ENCODE measurements at regions of chr10 and their contacts with region 1.

Region 1: DNA sequence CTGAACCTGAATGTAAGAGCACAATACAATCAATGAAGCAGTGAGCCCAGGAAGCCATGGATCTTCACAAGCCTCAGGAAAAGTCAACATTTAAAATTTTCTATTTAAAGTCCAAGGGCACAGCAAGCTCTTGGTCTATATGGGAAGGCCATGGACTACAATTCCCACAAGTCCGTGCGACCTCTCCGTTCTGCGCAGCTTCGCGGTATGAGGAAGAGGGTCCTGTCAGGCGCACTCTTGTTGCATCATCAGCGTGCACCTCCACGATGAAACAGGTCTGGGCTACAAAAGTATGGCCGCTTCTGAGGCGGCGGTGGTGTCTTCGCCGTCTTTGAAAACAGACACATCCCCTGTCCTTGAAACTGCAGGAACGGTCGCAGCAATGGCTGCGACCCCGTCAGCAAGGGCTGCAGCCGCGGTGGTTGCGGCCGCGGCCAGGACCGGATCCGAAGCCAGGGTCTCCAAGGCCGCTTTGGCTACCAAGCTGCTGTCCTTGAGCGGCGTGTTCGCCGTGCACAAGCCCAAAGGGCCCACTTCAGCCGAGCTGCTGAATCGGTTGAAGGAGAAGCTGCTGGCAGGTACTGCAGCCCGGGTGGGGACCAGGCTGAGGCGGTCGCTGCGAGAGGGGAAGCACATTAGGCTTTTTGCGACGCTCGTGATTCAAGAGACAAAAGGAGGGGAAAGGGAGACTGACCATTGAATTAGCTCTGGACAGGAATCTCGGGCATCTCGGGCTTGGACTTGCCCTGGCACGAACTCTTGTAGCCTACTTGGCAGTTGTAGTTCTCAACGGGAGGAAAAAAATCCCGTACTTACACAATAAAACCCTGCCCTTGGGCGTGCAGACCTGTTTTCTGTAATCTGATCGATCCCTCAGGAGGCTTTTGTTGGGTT is at the start of gene TRUB1:
- DNase-seq: peak; percentile 83
- H3K4me3 Mint-ChIP-seq: peak within 1 kb of the TSS; percentile 99
- H3K27ac Mint-ChIP-seq: peak within 1 kb of the TSS; percentile 84
- H3K4me1 Mint-ChIP-seq: peaks cover 35% of the 10 kb centered on the region
- H3K27me3 Mint-ChIP-seq: no peaks in the 10 kb centered on the region
- total RNA-seq, gene TRUB1: 21.6 TPM in 2 replicates

Region 2: DNA sequence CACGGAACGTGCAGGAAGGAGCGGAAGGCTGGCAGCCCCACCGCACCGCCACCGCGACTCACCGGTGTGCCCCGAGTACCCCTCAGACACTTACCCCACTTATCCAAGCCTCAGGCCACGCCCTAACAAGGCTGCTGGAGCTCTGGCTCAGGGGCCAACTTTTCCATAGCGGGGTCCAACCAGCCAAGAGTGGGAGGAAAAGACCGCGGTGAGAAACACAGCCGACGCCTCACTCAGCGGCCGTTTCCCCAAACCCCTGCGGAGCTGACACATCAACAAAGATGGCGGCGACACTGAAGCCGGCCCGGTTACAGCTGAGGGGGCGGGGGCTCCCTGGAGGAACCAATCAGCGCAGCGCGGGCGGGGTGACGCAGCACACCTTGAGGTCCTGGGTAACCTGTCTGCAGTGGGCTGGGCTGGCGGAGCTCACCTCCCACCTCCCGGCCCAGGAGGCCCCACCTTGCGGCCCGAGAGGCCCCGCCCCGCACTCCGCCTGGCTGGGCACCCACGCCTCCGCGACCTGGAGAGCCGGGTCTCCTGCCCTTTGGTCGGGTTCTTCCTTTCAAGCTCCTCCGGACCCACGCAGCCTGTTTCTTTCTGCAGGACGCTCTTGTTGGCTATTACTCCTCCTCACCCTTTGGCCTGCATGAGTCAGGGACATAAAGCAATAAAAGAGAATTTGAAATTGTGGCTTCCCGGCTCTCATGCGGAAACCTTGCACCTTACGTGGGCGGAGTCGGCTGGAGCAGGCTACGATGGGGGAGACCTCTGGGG is 764.1 kb before region 1 on chr10 and contains the start of gene CCDC186:
- intact Hi-C with region 1: loop called (anchors 5 kb)
- DNase-seq: peak; percentile 96
- H3K4me3 Mint-ChIP-seq: peak within 1 kb of the TSS; percentile 95
- H3K27ac Mint-ChIP-seq: peak within 1 kb of the TSS; percentile 91
- H3K4me1 Mint-ChIP-seq: peaks cover 35% of the 10 kb centered on the region
- H3K27me3 Mint-ChIP-seq: peaks cover 12% of the 10 kb centered on the region
- total RNA-seq, gene CCDC186: 12.1 and 13.0 TPM in 2 replicates